Naive thymus-derived CD4-positive, alpha-beta T cell (primary cell): ENCODE measurements at regions of chrX and their contacts with region 1.

Region 1: DNA sequence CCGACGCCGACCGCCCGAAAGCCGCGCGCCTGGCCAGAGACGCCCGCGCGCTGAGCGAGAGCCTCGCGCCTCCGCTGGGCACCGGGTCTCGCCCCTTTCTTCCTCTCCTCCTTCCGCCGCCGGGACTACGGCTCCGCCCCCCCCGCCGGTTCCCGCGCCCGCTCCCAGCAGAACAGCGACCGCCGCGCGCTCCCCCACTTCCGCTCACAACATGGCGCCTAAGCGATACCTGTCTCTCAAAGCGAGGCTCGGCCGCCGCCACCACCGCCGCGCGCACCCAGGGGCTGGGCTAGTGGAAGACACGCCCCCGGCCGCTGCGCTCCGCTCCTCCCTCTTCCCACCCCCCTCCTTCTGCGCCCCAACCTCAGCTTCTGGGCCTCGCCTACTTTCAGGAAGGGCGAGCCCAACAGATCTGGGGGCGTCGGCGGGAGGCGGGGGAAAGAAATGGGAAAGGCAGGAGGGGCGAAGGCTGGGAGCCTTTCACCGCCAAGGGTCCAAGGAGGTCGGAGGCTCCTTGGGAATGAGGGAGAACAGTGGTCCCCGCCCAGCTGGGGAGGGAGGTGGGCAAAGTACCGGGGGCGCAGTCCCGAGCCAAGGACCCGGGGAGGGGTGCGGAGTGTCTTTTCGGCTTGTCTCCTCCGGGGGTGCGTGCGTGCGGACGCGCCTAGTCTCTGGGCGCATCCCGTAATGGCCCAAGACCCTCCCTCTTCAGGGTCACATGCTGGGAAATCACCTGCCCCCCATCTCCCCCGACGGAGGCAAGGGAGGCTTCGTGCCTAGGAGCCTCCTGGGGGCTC is at the start of gene RPS6KA3:
- DNase-seq: peak; percentile 83 to 91 (median 88)
- ATAC-seq: peak; percentile 93
- H3K4me3 ChIP-seq: peak within 1 kb of the TSS; percentile 84
- H3K4me3 Mint-ChIP-seq: peak within 1 kb of the TSS; percentile 89 to 98 (median 95)
- H3K27ac ChIP-seq: peak within 1 kb of the TSS; percentile 77
- H3K27ac Mint-ChIP-seq: peak within 1 kb of the TSS; percentile 89 to 95 (median 91)
- H3K4me1 ChIP-seq: peaks cover 0 to 5% of the 10 kb centered on the region in 2 donors
- H3K4me1 Mint-ChIP-seq: peaks cover 0 to 27% (median 20%) of the 10 kb centered on the region in 7 donors
- H3K27me3 ChIP-seq: no peaks in the 10 kb centered on the region
- H3K27me3 Mint-ChIP-seq: peaks cover 0 to 21% (median 0%) of the 10 kb centered on the region in 5 donors
- total RNA-seq, gene RPS6KA3: 59.9 to 77.9 (median 72.6) TPM

Region 2: DNA sequence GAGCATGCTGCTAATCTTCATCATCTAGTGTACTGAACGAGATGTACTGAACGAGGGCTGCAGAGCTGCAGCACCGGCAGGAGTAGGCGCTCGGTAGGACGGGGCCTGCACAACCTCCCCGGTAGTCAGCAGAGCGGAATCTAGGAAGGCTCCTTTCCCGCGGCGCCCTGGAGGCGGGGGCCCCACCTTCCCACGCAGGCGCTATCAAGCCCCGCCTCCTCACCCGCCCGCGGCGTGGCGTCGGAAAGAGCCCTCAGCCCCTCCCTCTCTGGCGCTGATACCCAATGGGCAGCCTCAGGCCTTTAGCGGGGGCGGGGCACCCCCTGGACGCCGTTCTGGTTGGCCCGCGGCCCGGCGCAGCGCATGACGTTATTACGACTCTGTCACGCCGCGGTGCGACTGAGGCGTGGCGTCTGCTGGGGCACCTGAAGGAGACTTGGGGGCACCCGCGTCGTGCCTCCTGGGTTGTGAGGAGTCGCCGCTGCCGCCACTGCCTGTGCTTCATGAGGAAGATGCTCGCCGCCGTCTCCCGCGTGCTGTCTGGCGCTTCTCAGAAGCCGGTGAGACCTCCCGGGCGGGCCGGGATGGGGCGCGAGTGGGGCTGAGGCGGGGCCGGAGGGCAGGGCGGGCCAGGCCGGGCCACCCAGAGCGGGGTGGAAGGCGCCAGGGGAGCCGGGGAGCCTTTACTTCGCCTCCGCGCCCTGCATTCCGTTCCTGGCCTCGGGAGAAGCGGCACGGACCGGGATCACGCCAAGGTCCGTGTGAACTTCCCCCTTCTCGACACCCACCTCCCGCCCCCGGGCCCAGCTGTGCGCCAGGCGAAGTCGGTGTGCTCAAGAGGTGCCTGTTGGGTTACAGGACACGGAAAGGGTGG is 923.2 kb before region 1 on chrX and contains the start of gene PDHA1:
- CTCF ChIA-PET with region 1: no interaction called
- POLR2A ChIA-PET with region 1: no interaction called
- intact Hi-C with region 1: loop called in 1 of 2 experiments (anchors 5 kb)
- DNase-seq: peak; percentile 73 to 94 (median 91)
- ATAC-seq: peak; percentile 99
- H3K4me3 ChIP-seq: peak within 1 kb of the TSS; percentile 71
- H3K4me3 Mint-ChIP-seq: peak within 1 kb of the TSS; percentile 79 to 90 (median 87)
- H3K27ac ChIP-seq: peak within 1 kb of the TSS; percentile 86
- H3K27ac Mint-ChIP-seq: peak within 1 kb of the TSS; percentile 82 to 95 (median 89)
- H3K4me1 ChIP-seq: peaks cover 6 to 9% of the 10 kb centered on the region in 2 donors
- H3K4me1 Mint-ChIP-seq: peaks cover 0 to 28% (median 14%) of the 10 kb centered on the region in 7 donors
- H3K27me3 ChIP-seq: no peaks in the 10 kb centered on the region
- H3K27me3 Mint-ChIP-seq: no peaks in the 10 kb centered on the region
- total RNA-seq, gene PDHA1: 113 to 123 (median 119) TPM

Region 3: DNA sequence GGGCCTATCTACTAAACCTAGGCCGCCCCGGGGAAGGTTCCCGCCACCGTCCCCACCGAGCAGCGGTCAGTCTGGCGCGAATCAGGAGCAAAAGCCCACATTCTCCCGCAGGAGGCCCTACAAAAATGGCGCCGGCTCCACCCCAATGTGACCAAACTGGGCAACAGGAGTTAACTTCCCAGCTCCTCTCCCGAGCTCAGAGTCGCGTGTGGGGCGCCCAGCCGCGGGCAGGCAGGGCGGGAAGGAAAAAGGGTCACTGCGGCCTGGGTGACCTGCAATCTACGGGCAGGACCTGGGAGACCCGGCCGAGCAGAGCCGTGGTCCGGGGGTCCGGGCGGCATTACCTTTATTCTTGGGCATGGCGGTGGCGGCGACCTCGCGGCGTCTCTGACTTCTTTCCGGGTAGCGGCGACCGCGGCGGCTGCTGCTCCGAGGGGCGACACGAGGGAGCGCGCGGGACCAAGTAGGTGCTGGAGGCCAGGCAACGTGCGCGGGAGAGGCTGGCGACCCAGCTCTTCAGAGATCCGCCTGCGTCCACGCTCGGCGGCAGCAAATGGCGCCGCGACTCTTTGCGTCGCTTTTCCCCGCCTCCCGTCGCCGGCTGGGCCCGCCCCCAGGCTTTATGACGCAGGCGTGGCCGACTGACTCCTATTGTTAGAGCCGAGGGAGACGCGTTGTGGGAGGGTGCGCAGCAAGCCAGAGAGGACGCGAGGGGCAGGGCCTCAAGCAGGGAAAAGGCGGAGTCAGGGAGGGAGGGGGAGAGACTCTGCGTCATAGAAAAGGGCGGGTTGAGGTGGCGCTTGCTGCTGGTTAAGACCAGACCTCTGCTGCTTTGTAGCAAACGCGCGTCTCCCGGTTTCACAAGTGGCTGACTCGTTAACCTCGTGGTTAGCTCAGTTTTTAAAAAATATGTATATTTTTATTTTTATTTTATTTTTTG is 125.5 kb before region 1 on chrX and contains the start of gene EIF1AX:
- CTCF ChIA-PET with region 1: no interaction called
- POLR2A ChIA-PET with region 1: interaction called, 3 read pairs
- intact Hi-C with region 1: loop called (anchors 1 to 5 kb)
- DNase-seq: peak; percentile 82 to 100 (median 98)
- ATAC-seq: peak; percentile 99
- H3K4me3 ChIP-seq: peak within 1 kb of the TSS; percentile 84
- H3K4me3 Mint-ChIP-seq: peak within 1 kb of the TSS; percentile 80 to 96 (median 88)
- H3K27ac ChIP-seq: peak within 1 kb of the TSS; percentile 93
- H3K27ac Mint-ChIP-seq: peak within 1 kb of the TSS; percentile 68 to 97 (median 89)
- H3K4me1 ChIP-seq: peaks cover 8 to 13% of the 10 kb centered on the region in 2 donors
- H3K4me1 Mint-ChIP-seq: peaks cover 4 to 42% (median 27%) of the 10 kb centered on the region in 7 donors
- H3K27me3 ChIP-seq: no peaks in the 10 kb centered on the region
- H3K27me3 Mint-ChIP-seq: no peaks in the 10 kb centered on the region
- total RNA-seq, gene EIF1AX: 40.2 to 67.5 (median 51.6) TPM

Region 4: DNA sequence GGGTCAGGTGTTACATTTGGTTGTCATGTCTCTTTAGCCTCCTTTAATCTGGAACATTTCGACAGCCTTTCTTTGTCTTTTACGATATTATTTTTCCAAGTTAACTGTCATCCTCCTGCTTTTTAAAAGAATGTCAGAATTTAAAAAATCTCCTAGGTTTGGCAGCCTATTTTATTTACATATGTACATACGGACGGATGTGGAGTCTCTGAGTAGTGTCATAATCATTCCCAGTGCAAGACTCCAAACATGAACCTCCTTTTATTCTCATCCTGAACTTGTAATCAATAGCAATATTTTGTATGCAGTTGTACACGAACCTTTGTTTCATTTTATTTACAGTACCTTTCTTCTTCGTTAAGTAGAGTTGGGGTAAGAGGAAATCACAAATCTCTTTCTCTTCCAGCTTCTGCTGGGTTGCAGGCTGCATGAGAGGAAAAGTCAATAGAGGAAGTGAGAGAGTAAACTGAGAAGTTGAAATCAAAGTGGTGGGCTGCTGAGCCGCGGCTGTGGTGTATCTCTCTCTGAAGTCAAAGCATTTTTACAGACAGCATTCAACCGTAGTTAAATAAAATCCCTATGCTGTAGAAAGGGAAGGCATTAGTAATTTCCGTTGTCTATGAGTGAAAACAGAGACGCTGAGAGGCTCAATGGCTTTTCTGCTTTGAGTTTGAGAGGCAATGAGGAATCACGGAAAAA is 53.6 kb after region 1 on chrX:
- CTCF ChIA-PET with region 1: no interaction called
- POLR2A ChIA-PET with region 1: no interaction called
- intact Hi-C with region 1: loop called in 1 of 2 experiments (anchors 5 kb)
- DNase-seq: peak in 6 of 9 donors; percentile 17 to 53 (median 46)
- ATAC-seq: peak; percentile 74
- H3K4me3 ChIP-seq: peak overlapping the region; percentile 29
- H3K4me3 Mint-ChIP-seq: peak overlapping the region; percentile 39 to 83 (median 74)
- H3K27ac ChIP-seq: no peak overlapping the region
- H3K27ac Mint-ChIP-seq: peak overlapping the region in 8 of 9 donors; percentile 48 to 91 (median 80)
- H3K4me1 ChIP-seq: peaks cover 4 to 13% of the 10 kb centered on the region in 2 donors
- H3K4me1 Mint-ChIP-seq: peaks cover 20 to 48% (median 28%) of the 10 kb centered on the region in 7 donors
- H3K27me3 ChIP-seq: no peaks in the 10 kb centered on the region
- H3K27me3 Mint-ChIP-seq: peaks cover 0 to 2% (median 0%) of the 10 kb centered on the region in 5 donors

Region 5: GRCh38 chrX:20412871-20413486 is 146.0 kb after region 1 on chrX:
- CTCF ChIA-PET with region 1: no interaction called
- POLR2A ChIA-PET with region 1: no interaction called
- intact Hi-C with region 1: loop called (anchors 1 kb)
- DNase-seq: peak; percentile 20 to 80 (median 66)
- ATAC-seq: peak; percentile 93
- H3K4me3 ChIP-seq: peak overlapping the region; percentile 22
- H3K4me3 Mint-ChIP-seq: peak overlapping the region; percentile 55 to 88 (median 72)
- H3K27ac ChIP-seq: peak overlapping the region; percentile 66
- H3K27ac Mint-ChIP-seq: peak overlapping the region; percentile 86 to 98 (median 93)
- H3K4me1 ChIP-seq: peaks cover 22 to 40% of the 10 kb centered on the region in 2 donors
- H3K4me1 Mint-ChIP-seq: peaks cover 13 to 55% (median 46%) of the 10 kb centered on the region in 7 donors
- H3K27me3 ChIP-seq: no peaks in the 10 kb centered on the region
- H3K27me3 Mint-ChIP-seq: peaks cover 0 to 2% (median 0%) of the 10 kb centered on the region in 5 donors

Region 6: GRCh38 chrX:21374163-21374993 is 1107.4 kb after region 1 on chrX and contains the start of gene CNKSR2:
- CTCF ChIA-PET with region 1: no interaction called
- POLR2A ChIA-PET with region 1: no interaction called
- intact Hi-C with region 1: loop called in 1 of 2 experiments (anchors 10 kb)
- DNase-seq: peak; percentile 40 to 79 (median 70)
- ATAC-seq: peak; percentile 83
- H3K4me3 ChIP-seq: peak within 1 kb of the TSS; percentile 62
- H3K4me3 Mint-ChIP-seq: peak within 1 kb of the TSS; percentile 84 to 95 (median 92)
- H3K27ac ChIP-seq: peak within 1 kb of the TSS; percentile 70
- H3K27ac Mint-ChIP-seq: peak within 1 kb of the TSS; percentile 55 to 90 (median 82)
- H3K4me1 ChIP-seq: peaks cover 0 to 7% of the 10 kb centered on the region in 2 donors
- H3K4me1 Mint-ChIP-seq: peaks cover 6 to 39% (median 34%) of the 10 kb centered on the region in 7 donors
- H3K27me3 ChIP-seq: no peaks in the 10 kb centered on the region
- H3K27me3 Mint-ChIP-seq: peaks cover 0 to 14% (median 0%) of the 10 kb centered on the region in 5 donors
- total RNA-seq, gene CNKSR2: 6.3 to 25.3 (median 16.9) TPM